SK-MEL-5 (cell line): ENCODE measurements at regions of chr7 and their contacts with region 1.

Region 1: GRCh38 chr7:7182156-7183060 is at the start of gene C1GALT1:
- DNase-seq: peak; percentile 98
- total RNA-seq, gene C1GALT1: 70.8 and 75.7 TPM in 2 replicates

Region 2: DNA sequence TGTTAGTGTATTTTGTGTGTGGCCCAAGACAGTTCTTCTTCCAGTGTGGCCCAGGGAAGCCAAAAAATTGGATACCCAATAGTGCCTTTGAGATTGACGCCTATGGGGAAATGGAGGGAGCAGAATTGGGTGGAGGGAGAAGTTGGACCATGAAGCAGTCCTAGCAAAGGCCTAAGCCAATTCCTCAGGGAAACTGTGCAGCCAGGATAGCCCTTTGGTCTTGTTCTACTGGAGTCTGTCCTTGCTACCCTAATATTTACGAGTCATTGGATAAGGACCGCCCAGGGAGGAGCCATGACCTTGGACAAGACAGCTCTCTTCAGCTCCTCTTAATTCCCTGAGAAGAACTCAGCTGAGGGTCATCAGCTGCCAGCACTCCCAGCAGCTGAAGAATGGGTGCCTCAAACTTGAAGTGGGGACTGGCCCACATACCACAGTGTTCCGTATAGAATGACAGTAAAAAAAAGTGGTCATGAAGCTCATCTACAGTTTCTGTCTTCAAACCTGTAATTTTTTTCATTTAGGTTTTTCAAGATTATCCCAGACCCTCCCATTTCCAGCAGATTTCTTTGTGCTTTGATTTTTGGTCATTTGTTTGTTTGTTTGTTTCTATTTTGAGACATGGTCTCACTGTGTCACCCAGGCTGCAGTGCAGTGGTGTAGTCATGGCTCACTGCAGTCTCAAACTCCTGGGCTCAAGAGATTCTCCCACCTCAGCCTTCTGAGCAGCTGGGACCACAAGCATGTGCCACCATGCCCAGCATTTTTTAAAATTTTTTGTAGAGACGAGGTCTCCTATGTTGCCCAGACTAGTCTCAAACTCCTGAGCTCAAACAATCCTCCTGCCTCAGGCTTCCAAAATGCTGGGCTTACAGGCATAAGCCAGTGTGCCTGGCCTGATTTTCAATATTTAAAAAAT is 81.2 kb after region 1 on chr7:
- in situ Hi-C with region 1: loop called (anchors 5 kb)
- DNase-seq: no peak

Region 3: GRCh38 chr7:7274782-7275181 is 92.4 kb after region 1 on chr7:
- in situ Hi-C with region 1: no loop called
- DNase-seq: no peak